ENCODE measurements at regions of chr1 and their contacts with region 1.

Region 1: DNA sequence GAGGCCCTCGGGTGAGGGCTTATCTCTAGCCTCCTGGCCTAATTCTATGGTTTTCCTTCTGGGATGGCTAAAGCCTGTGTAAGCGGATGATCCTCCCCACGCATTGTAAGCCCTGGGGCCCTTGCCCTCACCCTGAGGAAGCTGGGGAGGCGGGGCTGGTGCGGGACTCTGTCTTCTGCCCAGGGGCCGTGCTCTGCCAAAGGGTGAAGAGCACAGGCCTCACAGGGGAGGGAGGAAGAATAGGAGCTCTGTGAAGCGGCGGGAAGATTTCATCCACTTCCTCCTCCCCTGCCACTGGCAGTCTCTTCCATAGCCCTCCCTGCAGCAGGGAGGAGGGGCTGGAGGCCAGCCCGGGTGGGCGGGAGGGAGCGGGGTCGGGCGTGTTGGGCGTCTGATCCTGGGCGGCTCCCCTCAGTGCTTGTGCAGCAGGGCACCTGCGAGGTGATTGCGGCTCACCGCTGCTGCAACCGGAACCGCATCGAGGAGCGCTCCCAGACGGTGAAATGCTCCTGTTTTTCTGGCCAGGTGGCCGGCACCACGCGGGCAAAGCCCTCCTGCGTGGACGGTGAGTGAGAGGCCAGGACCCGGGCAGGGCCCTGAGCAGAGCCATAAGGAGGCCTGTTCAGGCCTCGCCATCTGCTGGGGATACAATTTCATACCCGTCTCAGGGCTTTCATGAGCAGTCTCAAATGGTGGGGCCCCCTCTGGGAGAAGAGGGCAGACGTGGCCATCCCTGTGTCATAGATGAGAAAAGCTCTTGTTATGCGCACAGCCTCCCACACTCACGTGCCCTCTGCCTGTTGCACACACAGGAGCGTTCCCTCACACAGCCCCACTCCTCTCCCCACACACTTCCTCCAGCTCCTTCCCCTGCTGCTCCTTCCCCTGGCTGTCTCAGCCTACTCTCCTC is 7.7 kb upstream of the PPM1J start:
- DNase-seq: no peak
- ATAC-seq: peak; percentile 45
- H3K4me3 ChIP-seq: no peak overlapping the region
- H3K27ac ChIP-seq: no peak overlapping the region
- H3K4me1 ChIP-seq: peaks cover 0 to 20% of the 10 kb centered on the region in 2 experiments; a peak in 4 of 5 replicates
- H3K27me3 ChIP-seq: peaks cover 11 to 51% of the 10 kb centered on the region in 2 experiments; a peak in 4 of 5 replicates
- CTCF ChIP-seq: peak in 1 of 3 experiments; percentile 2; a peak in 1 of 6 replicates
- EP300 ChIP-seq: no peak
- POLR2A ChIP-seq: no peak
- RAD21 ChIP-seq: no peak

Region 2: DNA sequence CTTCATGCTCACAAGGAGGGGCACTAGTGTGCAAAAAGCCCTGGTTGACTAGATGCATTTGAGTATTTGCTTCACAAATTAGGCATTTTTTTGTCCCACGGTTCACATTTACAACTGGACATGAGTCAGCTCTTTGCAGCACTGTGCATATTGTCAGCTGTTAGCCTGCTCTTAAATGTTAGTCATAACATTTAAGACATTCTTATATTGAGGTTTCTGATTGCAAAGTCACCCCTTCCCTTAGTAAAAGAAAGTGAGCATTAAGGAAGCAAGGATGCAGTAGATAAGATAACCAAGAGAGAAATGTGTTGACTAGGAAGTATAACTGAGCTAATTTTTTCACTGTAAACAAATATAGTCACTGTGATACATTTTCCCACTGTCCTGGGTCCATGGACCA is 459.4 kb before region 1 on chr1:
- CTCF ChIA-PET with region 1: no interaction called
- POLR2A ChIA-PET with region 1: no interaction called
- in situ Hi-C with region 1: no loop called
- intact Hi-C with region 1: no loop called
- DNase-seq: no peak
- ATAC-seq: no peak
- H3K4me3 ChIP-seq: no peak overlapping the region
- H3K27ac ChIP-seq: no peak overlapping the region
- H3K4me1 ChIP-seq: peaks cover 0 to 9% of the 10 kb centered on the region in 2 experiments; a peak in 2 of 5 replicates
- H3K27me3 ChIP-seq: no peaks in the 10 kb centered on the region
- CTCF ChIP-seq: no peak
- EP300 ChIP-seq: no peak
- POLR2A ChIP-seq: no peak
- RAD21 ChIP-seq: no peak

Region 3: GRCh38 chr1:112759228-112759627 is 36.4 kb after region 1 on chr1:
- CTCF ChIA-PET with region 1: no interaction called
- POLR2A ChIA-PET with region 1: no interaction called
- in situ Hi-C with region 1: loop called (anchors 5 kb)
- intact Hi-C with region 1: no loop called
- DNase-seq: no peak
- ATAC-seq: no peak
- H3K4me3 ChIP-seq: no peak overlapping the region
- H3K27ac ChIP-seq: no peak overlapping the region
- H3K4me1 ChIP-seq: no peaks in the 10 kb centered on the region
- H3K27me3 ChIP-seq: peaks cover 43 to 48% of the 10 kb centered on the region in 2 experiments
- CTCF ChIP-seq: no peak
- EP300 ChIP-seq: no peak
- POLR2A ChIP-seq: no peak
- RAD21 ChIP-seq: no peak